ENCODE measurements at regions of chr16 and their contacts with region 1.

Region 1: DNA sequence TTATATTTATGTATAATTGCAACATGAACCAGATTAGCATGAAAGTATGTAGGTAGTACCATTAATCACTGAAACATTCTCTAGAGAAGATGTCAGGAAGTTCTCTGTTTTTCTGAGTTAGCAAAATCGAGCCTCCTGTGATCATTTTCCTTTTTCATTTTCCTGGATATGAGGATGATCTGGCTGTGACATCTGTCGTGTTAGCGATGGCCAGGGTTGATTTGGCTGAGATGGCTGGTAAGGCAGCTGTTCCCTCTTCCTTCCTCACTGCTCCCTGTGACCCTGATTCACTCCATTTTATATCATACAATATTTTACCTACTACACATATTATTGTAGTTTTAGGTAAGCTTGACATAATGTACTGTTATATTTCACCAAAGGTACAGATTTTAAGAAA is 10.3 kb downstream of the CNTNAP4 start:
- DNase-seq: no peak
- ATAC-seq: no peak
- H3K4me3 ChIP-seq: no peak overlapping the region
- H3K27ac ChIP-seq: no peak overlapping the region
- H3K4me1 ChIP-seq: no peaks in the 10 kb centered on the region
- H3K27me3 ChIP-seq: no peaks in the 10 kb centered on the region
- CTCF ChIP-seq: no peak
- POLR2A ChIP-seq: no peak

Region 2: DNA sequence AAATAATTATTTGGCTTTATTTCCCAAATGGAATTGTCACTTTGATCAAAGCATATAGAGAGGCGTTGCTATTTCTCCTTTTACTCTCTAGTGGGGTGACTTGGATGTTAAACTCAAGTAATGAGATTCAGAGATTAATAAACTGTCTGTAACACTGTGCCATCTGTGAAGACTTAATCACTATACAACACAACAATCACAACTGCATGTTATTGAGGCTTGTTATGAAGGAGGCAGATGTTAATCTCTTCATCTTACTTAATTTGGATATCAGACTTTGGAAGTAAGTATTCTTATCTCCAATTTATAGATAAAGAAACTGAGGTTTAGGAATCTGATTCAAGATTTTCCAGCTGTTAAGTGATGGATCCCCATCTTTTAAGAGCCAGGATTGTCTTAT is 122.2 kb after region 1 on chr16:
- intact Hi-C with region 1: no loop called
- DNase-seq: no peak
- ATAC-seq: no peak
- H3K4me3 ChIP-seq: no peak overlapping the region
- H3K27ac ChIP-seq: no peak overlapping the region
- H3K4me1 ChIP-seq: no peaks in the 10 kb centered on the region
- H3K27me3 ChIP-seq: no peaks in the 10 kb centered on the region
- CTCF ChIP-seq: no peak
- POLR2A ChIP-seq: no peak

Region 3: DNA sequence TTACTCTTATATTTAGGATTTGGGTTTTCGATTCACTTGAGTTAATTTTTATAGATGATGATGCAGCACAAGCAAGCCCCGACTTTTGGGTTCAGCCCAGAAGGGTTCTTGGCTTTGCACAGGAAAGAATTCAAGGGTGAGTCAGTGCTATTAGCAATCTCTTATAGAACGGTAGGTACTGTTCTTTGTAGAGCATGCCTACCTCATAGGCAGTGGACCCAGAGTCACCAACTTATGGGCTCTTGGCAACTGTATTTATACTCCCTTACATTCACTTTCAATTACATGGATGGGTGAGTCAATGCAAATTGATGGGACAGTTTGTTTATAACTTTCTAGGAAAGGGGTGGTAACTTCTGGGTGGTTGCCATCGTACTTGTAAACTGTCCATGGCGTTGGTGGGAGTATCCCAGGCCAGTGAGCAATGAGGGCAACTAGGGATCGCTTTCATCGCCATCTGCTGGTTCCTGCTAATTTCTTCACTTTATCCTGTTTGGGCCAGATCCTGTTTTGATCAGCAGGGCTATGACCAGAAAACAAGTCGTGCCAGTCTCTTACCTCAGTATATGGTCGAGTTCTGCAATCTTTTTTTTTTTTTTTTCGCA is 352.3 kb after region 1 on chr16:
- intact Hi-C with region 1: loop called in 1 of 10 experiments (anchors 10 kb)
- DNase-seq: no peak
- ATAC-seq: no peak
- H3K4me3 ChIP-seq: no peak overlapping the region
- H3K27ac ChIP-seq: no peak overlapping the region
- H3K4me1 ChIP-seq: no peaks in the 10 kb centered on the region
- H3K27me3 ChIP-seq: no peaks in the 10 kb centered on the region
- CTCF ChIP-seq: peak in 1 of 12 donors; percentile 4
- POLR2A ChIP-seq: no peak

Measured in heart left ventricle (tissue), 16 donors.